SK-N-SH (cell line): ENCODE measurements at regions of chr15 and their contacts with region 1.

Region 1: DNA sequence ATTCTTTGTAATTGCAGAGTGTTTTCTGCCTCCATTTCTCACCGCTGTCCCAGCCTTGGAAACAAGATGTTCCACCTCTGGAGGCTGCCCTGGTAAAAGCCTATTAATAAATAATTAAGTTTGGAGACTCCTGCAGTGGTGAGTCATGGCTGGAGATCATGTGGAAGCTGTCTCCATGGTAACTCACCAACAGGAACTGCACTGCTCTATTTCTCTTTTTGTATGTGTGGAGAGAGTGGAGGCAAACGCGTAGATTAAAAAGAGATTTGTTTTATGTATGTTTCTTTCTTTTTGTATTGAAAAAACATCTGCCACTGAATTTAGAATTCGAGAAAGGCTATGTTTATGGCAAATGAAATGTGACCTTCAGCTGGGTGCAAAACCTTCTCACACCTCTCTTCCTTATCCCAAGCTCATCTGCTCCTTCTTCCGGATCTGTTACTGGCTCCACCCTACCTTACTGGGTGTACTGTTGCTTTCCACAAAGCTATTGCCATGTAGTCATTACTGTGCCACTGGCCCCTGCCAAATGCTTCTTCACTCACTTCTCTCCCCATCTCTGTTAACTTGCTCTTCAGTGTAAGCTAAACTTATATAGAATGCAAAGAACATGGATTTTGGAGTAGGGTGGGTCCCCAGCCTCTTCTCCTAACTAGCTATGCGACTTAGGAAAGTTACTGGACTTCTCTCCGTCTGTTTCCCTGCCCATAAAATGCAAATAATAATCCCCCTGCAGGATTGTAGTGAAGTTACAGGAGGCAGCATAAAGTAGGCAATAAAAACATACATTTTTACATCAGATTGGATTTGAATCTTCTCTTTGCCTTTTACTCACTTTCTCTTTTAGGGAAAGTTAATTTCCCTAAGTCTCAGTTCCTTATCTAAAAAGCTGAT is 778.5 kb downstream of the NTRK3 start:
- DNase-seq: peak; percentile 49
- H3K4me3 ChIP-seq: peak overlapping the region; percentile 25 to 53
- H3K27ac ChIP-seq: peak overlapping the region; percentile 80 to 91
- H3K4me1 ChIP-seq: peaks cover 0 to 18% of the 10 kb centered on the region in 2 experiments; a peak in 2 of 4 replicates
- H3K27me3 ChIP-seq: no peaks in the 10 kb centered on the region
- CTCF ChIP-seq: peak; percentile 53
- EP300 ChIP-seq: peak in 1 of 2 experiments; percentile 53; a peak in 1 of 4 replicates
- RAD21 ChIP-seq: peak; percentile 23

Region 2: GRCh38 chr15:87498560-87498959 is 20.5 kb after region 1 on chr15:
- CTCF ChIA-PET with region 1: interaction called, 16 read pairs
- POLR2A ChIA-PET with region 1: no interaction called
- DNase-seq: no peak
- H3K4me3 ChIP-seq: no peak overlapping the region
- H3K27ac ChIP-seq: no peak overlapping the region
- H3K4me1 ChIP-seq: peaks cover 0 to 5% of the 10 kb centered on the region in 2 experiments; a peak in 1 of 4 replicates
- H3K27me3 ChIP-seq: no peaks in the 10 kb centered on the region
- CTCF ChIP-seq: no peak
- EP300 ChIP-seq: no peak
- RAD21 ChIP-seq: no peak